CD8-positive, alpha-beta T cell (primary cell): ENCODE measurements at regions of chr17 and their contacts with region 1.

Region 1: GRCh38 chr17:40615295-40615988 is 32.2 kb downstream of the SMARCE1 start:
- DNase-seq: peak in 7 of 9 experiments; percentile 45 to 88 (median 71)
- ATAC-seq: peak; percentile 45
- H3K4me3 ChIP-seq: peak overlapping the region in 1 of 2 experiments; percentile 7
- H3K4me3 Mint-ChIP-seq: peak overlapping the region; percentile 44
- H3K27ac ChIP-seq: peak overlapping the region; percentile 62 to 92
- H3K27ac Mint-ChIP-seq: peak overlapping the region; percentile 97
- H3K4me1 ChIP-seq: peaks cover 76% of the 10 kb centered on the region
- H3K4me1 Mint-ChIP-seq: peaks cover 71% of the 10 kb centered on the region
- H3K27me3 ChIP-seq: no peaks in the 10 kb centered on the region
- H3K27me3 Mint-ChIP-seq: no peaks in the 10 kb centered on the region
- CTCF ChIP-seq: no peak

Region 2: GRCh38 chr17:40399185-40399584 is 216.3 kb before region 1 on chr17:
- CTCF ChIA-PET with region 1: interaction called, 4 read pairs
- POLR2A ChIA-PET with region 1: no interaction called
- intact Hi-C with region 1: loop called (anchors 1 to 5 kb)
- DNase-seq: peak in 2 of 9 experiments; percentile 71 to 78
- ATAC-seq: peak; percentile 55
- H3K4me3 ChIP-seq: no peak overlapping the region
- H3K4me3 Mint-ChIP-seq: no peak overlapping the region
- H3K27ac ChIP-seq: no peak overlapping the region
- H3K27ac Mint-ChIP-seq: no peak overlapping the region
- H3K4me1 ChIP-seq: no peaks in the 10 kb centered on the region
- H3K4me1 Mint-ChIP-seq: peaks cover 16% of the 10 kb centered on the region
- H3K27me3 ChIP-seq: no peaks in the 10 kb centered on the region
- H3K27me3 Mint-ChIP-seq: no peaks in the 10 kb centered on the region
- CTCF ChIP-seq: peak; percentile 74

Region 3: DNA sequence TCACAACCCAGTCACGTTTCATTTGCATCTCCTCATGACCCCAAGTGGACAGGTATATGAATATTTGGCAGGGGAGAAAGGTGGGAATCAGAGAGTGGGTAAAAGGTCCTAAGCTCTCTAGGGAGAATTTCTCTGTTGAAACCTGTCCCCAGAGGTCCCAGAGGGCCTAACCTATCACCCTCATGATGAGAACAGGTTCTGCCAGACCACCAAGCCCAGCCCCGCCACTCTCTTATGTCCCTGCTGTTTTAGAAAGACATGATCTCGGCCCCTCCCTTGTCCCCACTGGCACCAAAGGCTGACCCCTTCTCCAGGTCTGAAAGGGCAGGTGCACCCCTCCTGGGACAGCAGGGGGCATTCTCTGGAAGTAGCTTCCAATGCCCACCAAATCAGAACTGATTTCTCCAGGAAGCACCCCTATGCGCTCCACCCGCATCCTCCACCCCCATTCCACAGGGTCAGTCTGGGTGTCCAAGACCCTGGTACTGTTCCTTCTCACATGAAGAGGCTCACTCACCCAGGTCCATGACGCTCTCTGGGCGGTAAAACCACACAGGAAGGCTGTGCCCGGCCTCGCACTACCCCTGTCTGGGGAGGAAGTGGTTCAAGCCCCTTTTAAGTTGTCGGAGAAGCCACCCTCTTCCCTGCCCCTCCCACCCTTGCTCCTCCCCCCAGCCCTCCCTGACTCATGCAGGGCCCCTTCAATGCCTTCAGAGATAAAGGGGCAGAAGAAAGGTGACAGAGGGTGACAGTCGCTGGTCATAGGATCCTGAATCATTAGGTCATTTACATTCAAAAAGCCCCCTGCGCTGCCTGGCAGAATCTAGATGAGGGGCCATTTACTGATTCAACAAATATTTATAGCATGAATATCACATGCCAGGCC is 50.3 kb before region 1 on chr17 and contains the start of gene CCR7:
- CTCF ChIA-PET with region 1: interaction called, 638 read pairs
- POLR2A ChIA-PET with region 1: interaction called, 724 read pairs
- intact Hi-C with region 1: loop called (anchors 1 kb)
- DNase-seq: peak; percentile 79 to 94 (median 91)
- ATAC-seq: peak; percentile 58
- H3K4me3 ChIP-seq: peak within 1 kb of the TSS; percentile 71
- H3K4me3 Mint-ChIP-seq: peak within 1 kb of the TSS; percentile 86
- H3K27ac ChIP-seq: peak within 1 kb of the TSS; percentile 74 to 96
- H3K27ac Mint-ChIP-seq: peak within 1 kb of the TSS; percentile 94
- H3K4me1 ChIP-seq: peaks cover 34% of the 10 kb centered on the region
- H3K4me1 Mint-ChIP-seq: peaks cover 83% of the 10 kb centered on the region
- H3K27me3 ChIP-seq: no peaks in the 10 kb centered on the region
- H3K27me3 Mint-ChIP-seq: no peaks in the 10 kb centered on the region
- CTCF ChIP-seq: no peak
- total RNA-seq, gene CCR7: 196 to 199 TPM

Region 4: DNA sequence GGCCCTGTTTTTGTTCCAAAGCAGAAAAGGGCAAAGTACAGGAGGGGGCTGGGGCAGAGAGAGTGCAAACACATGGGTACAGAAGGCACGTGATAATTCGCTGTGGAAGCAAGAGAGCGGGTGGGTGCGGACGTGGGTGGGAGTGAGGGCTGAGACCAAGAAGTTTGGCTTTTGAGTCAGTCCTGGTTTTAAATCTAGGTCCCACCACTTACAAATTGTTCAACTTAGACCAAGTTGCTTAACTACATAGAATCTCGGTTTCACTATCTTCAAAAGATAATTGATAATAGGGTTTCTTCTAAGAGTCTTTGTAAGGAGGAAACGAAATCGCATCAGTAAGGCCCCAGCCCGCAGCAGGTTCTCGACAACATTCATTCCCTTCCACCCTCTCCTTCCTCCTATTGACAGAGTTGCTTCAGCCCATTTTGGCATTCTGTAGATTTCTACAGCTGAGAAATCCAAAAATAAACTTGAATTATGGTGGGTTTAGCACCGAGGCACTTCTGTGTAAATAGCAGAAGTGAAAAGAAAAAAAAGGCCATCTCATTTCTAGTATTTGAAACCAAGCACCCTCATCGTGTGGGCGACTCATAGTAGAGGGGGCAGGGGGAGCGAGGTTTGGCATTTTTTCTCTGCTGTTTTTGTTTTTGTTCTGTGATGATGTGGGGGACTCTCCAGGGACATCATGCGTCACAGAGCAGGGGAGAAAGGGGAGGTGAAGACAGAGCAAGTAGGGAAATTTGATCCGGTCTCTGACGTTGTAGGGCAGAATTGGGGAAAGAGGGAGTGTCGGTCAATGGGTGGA is 16.6 kb before region 1 on chr17:
- CTCF ChIA-PET with region 1: interaction called, 66 read pairs
- POLR2A ChIA-PET with region 1: interaction called, 44 read pairs
- intact Hi-C with region 1: loop called (anchors 1 kb)
- DNase-seq: peak in 8 of 9 experiments; percentile 48 to 95 (median 70)
- ATAC-seq: peak; percentile 66
- H3K4me3 ChIP-seq: peak overlapping the region; percentile 12 to 20
- H3K4me3 Mint-ChIP-seq: peak overlapping the region; percentile 69
- H3K27ac ChIP-seq: peak overlapping the region; percentile 82 to 92
- H3K27ac Mint-ChIP-seq: peak overlapping the region; percentile 100
- H3K4me1 ChIP-seq: peaks cover 98% of the 10 kb centered on the region
- H3K4me1 Mint-ChIP-seq: peaks cover 97% of the 10 kb centered on the region
- H3K27me3 ChIP-seq: no peaks in the 10 kb centered on the region
- H3K27me3 Mint-ChIP-seq: no peaks in the 10 kb centered on the region
- CTCF ChIP-seq: no peak

Region 5: DNA sequence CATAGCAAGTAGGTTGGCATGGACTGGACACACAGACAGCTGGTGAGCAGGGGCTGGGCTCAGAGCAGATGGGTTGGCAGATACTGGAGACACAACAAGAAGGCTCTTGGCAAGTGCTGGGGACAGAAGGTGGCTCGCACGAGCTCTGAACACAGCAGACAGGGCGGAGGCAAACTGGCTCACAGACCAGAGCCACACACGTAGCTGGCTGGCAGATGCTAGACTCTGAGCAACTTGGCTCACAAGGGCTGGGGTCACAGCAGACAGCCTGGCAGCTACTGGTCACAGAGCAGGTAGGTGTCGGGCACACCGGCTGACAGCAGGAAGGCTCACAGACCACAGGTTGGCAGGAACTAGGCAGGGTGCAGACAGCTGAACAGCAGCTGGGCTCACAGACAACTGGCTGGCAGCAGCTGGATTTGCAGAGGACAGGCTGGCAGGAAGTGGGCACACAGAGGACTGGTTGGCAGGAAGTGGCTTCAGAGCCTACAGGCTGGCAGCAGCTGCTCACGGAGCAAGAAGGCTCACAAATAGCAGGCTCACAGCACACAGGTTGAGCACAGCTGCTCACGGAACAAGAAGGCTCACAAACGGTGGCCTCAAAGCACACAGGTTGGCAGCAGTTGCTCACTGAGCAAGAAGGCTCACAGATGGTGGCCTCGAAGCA is 692.9 kb after region 1 on chr17:
- CTCF ChIA-PET with region 1: no interaction called
- POLR2A ChIA-PET with region 1: interaction called, 3 read pairs
- intact Hi-C with region 1: loop called in 1 of 2 experiments (anchors 10 kb)
- DNase-seq: peak; percentile 75 to 95 (median 84)
- ATAC-seq: peak; percentile 82
- H3K4me3 ChIP-seq: peak overlapping the region; percentile 4 to 25
- H3K4me3 Mint-ChIP-seq: peak overlapping the region; percentile 56
- H3K27ac ChIP-seq: peak overlapping the region; percentile 79 to 80
- H3K27ac Mint-ChIP-seq: peak overlapping the region; percentile 98
- H3K4me1 ChIP-seq: peaks cover 48% of the 10 kb centered on the region
- H3K4me1 Mint-ChIP-seq: peaks cover 62% of the 10 kb centered on the region
- H3K27me3 ChIP-seq: no peaks in the 10 kb centered on the region
- H3K27me3 Mint-ChIP-seq: no peaks in the 10 kb centered on the region
- CTCF ChIP-seq: no peak

Region 6: DNA sequence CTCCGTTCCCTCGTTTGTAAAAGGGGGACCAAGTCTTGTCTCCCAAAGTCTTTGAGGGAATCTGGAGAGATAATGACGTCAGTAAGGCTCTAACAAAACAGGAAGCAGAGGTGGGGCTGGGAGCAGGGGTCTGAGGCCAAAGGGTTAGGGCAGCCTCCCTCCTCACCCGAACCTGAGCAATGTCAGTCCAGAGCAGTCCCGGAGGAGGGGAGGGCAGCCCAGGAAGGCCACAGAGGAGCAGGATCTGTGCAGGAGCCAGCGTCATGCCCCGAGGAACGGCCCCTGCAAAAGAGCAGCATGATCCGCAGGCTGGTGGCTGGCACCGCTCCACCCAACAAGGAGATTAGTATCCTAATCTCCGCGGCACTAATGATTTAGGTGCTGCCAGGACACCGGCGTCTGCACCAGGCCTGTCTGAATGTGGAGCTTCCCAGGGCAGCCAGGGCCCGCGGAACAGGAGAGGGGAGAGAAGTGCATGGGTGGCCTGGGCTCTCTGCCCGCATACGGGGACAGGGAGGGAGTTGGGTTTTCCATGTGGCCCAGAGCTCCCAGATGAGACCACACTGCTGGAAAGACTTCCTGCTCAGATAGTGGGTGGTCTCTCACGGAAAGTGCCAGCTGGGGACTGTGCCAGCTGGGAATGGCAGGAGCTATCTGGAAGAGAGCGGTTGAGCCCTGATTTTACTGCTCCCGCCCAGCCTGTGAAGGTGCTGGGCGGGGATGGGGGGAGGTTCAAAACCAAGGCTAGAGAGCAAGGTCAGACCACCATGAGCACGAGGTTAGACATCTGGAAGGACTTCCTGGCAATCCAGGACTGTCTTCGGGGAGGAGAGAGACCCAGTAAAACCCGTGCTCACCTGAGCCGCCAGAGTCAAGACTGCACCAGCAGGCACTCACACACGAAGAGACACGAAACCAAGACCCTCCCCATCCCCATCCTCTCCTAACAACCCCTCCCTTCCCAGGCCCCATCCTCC is 1020.0 kb after region 1 on chr17:
- CTCF ChIA-PET with region 1: no interaction called
- POLR2A ChIA-PET with region 1: no interaction called
- intact Hi-C with region 1: no loop called
- DNase-seq: peak in 1 of 9 experiments; percentile 1
- ATAC-seq: no peak
- H3K4me3 ChIP-seq: no peak overlapping the region
- H3K4me3 Mint-ChIP-seq: no peak overlapping the region
- H3K27ac ChIP-seq: no peak overlapping the region
- H3K27ac Mint-ChIP-seq: no peak overlapping the region
- H3K4me1 ChIP-seq: no peaks in the 10 kb centered on the region
- H3K4me1 Mint-ChIP-seq: no peaks in the 10 kb centered on the region
- H3K27me3 ChIP-seq: peaks cover 0 to 4% of the 10 kb centered on the region in 2 experiments
- H3K27me3 Mint-ChIP-seq: no peaks in the 10 kb centered on the region
- CTCF ChIP-seq: no peak